ENCODE measurements at regions of chr10 and their contacts with region 1.

Region 1: DNA sequence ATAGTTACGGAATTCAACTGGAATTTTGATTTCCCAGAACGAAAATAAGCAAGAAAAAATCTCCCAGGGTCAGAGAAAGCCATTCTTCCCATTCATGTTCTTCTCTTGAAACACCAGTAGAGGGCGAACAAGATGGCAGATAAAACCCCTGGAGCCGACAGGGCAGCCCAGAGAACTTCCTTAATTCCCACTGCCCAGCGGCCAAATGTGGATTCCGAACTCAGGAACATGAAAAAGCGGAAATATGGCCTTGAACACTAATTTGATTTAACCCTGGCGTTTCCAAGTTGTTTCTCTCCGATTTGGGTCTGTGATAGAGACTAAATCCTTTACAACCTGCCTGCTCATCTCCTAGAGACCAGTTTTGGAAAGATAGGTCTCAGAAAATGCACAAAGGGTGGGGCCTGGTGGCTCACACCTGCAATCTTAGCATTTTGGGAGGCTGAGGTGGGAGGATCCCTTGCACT is 100.7 kb upstream of the WAC start:
- DNase-seq: peak; percentile 59
- H3K4me3 ChIP-seq: no peak overlapping the region
- H3K27ac ChIP-seq: no peak overlapping the region
- H3K4me1 ChIP-seq: peaks cover 0 to 11% (median 2%) of the 10 kb centered on the region in 4 donors
- H3K27me3 ChIP-seq: no peaks in the 10 kb centered on the region
- CTCF ChIP-seq: peak; percentile 73 to 82 (median 75)
- EP300 ChIP-seq: no peak
- POLR2A ChIP-seq: no peak

Region 2: DNA sequence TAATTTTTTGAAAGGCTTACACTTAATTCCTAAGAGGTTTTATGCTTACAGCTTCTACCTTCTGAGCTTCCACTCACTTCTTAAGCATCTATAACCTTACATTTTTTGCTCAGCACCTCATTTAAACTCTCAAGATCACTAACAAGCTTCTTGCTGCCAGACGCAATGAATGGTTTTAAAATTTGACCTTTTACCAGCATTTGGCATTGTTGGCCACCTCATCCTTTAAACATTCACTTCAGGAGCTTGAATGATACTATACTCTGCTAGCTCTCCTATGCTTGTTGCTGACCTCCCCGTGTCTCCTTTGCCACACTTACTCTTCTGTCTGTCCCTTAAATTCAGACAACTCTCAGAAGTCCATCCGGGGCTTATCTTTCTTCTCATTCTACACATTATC is 395.7 kb before region 1 on chr10:
- in situ Hi-C with region 1: no loop called
- intact Hi-C with region 1: no loop called
- DNase-seq: no peak
- H3K4me3 ChIP-seq: no peak overlapping the region
- H3K27ac ChIP-seq: no peak overlapping the region
- H3K4me1 ChIP-seq: no peaks in the 10 kb centered on the region
- H3K27me3 ChIP-seq: peaks cover 3% of the 10 kb centered on the region
- CTCF ChIP-seq: no peak
- EP300 ChIP-seq: no peak
- POLR2A ChIP-seq: no peak

Region 3: GRCh38 chr10:28532383-28533175 is 100.3 kb after region 1 on chr10 and contains the start of gene WAC:
- in situ Hi-C with region 1: loop called in 1 of 4 experiments (anchors 25 kb)
- intact Hi-C with region 1: no loop called
- DNase-seq: peak; percentile 97
- H3K4me3 ChIP-seq: peak within 1 kb of the TSS; percentile 65 to 99 (median 90)
- H3K27ac ChIP-seq: peak within 1 kb of the TSS; percentile 97 to 99 (median 98)
- H3K4me1 ChIP-seq: peaks cover 4 to 45% (median 25%) of the 10 kb centered on the region in 4 donors
- H3K27me3 ChIP-seq: no peaks in the 10 kb centered on the region
- CTCF ChIP-seq: peak in 1 of 5 experiments; percentile 40
- EP300 ChIP-seq: no peak
- POLR2A ChIP-seq: peak; percentile 90
- total RNA-seq, gene WAC: 66.6 to 102 (median 78.9) TPM

Region 4: DNA sequence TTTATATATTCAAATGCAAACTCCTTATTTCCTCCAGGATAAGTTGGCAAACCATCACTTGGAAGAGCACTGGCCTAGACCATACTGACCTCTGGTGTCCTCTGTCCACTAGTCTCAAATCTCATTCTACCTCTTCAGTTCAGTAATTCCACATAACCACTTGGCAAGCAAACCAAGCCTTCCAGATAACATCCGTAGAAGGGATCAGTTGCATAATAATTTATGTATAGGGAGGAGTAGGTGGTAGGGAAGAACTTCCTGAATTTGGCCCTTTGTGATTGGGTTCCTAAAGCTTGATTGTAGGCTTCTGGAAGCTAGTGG is 155.7 kb after region 1 on chr10:
- in situ Hi-C with region 1: loop called in 1 of 4 experiments (anchors 25 kb)
- intact Hi-C with region 1: no loop called
- DNase-seq: no peak
- H3K4me3 ChIP-seq: no peak overlapping the region
- H3K27ac ChIP-seq: peak overlapping the region; percentile 26 to 35 (median 28)
- H3K4me1 ChIP-seq: peaks cover 6 to 38% (median 20%) of the 10 kb centered on the region in 4 donors
- H3K27me3 ChIP-seq: no peaks in the 10 kb centered on the region
- CTCF ChIP-seq: peak in 3 of 5 experiments; percentile 9 to 16 (median 11)
- EP300 ChIP-seq: no peak
- POLR2A ChIP-seq: no peak

Region 5: GRCh38 chr10:28628184-28628893 is 196.1 kb after region 1 on chr10:
- in situ Hi-C with region 1: loop called in 1 of 4 experiments (anchors 25 kb)
- intact Hi-C with region 1: no loop called
- DNase-seq: peak; percentile 81
- H3K4me3 ChIP-seq: no peak overlapping the region
- H3K27ac ChIP-seq: no peak overlapping the region
- H3K4me1 ChIP-seq: no peaks in the 10 kb centered on the region
- H3K27me3 ChIP-seq: peaks cover 5% of the 10 kb centered on the region
- CTCF ChIP-seq: peak; percentile 64 to 88 (median 85)
- EP300 ChIP-seq: no peak
- POLR2A ChIP-seq: no peak